PC-3 (cell line): ENCODE measurements at regions of chr10 and their contacts with region 1.

Region 1: DNA sequence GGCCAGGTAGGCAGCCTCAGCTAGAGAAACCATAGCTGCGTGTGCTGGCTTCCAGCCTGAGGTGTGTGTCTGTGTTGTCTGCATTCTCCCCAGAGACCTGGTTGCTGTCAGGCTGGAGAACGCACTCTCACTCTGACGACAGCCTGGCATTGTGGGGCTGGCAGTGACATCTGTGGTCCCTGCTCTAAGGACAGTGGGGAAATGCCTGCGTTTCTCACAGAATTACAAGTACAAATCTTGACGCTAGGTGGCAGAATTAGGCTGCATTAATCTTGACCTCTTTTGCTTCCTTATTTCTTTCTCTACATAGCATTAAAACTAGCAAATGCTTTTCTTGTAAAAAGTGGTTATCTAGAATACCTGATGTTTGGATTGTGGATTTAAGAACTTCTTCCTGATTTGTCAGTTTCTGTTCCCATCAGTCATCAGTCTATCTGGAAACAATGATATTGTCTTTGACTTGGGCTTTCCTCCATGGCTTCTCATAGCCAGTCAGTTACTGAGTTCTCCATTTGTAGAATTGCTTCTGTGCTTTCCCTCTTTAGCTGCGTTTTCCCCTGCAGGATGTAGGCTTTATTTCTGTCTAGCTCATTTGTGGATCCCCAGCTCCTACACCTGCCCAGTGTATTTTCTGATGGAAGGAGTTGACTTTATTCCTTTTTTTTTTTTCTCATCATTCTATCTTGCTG is 86.0 kb downstream of the FANK1 start:
- DNase-seq: peak; percentile 84
- ATAC-seq: peak; percentile 77
- H3K4me3 ChIP-seq: no peak overlapping the region
- H3K27ac ChIP-seq: peak overlapping the region; percentile 31; the same call in 1 of the 2 replicates
- H3K4me1 ChIP-seq: peaks cover 9% of the 10 kb centered on the region
- H3K27me3 ChIP-seq: no peaks in the 10 kb centered on the region
- CTCF ChIP-seq: peak; percentile 66

Region 2: DNA sequence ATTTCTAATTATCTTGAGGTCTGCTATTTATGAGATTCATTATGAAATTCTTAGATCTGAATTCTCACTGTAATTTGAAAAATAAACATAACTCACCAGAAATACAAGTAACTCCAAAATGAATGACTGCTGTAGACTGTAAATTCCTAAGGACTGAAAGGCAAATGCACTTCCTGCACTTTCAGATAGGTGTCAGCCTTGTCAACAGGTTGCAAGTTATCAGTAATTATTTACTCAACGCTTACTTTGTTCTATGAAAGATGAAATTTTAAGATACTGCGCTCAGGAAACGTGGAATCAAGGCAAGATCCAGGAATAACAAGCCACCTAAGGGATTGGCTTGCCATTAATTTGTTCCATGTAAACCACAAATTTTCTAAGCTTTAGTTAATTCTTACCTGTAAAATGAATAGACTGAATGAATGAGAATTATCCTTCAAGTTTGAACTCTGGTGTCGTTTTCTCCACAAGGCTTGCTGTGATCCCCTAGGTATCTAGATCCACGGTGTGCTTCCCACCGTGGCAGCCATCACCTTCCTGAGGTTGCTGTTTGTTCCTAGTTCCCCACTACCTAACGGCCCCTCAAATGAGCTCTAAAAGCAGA is 113.9 kb before region 1 on chr10:
- CTCF ChIA-PET with region 1: no interaction called
- POLR2A ChIA-PET with region 1: no interaction called
- intact Hi-C with region 1: loop called (anchors 2 kb)
- DNase-seq: peak; percentile 74
- ATAC-seq: peak; percentile 67
- H3K4me3 ChIP-seq: no peak overlapping the region
- H3K27ac ChIP-seq: no peak overlapping the region
- H3K4me1 ChIP-seq: no peaks in the 10 kb centered on the region
- H3K27me3 ChIP-seq: no peaks in the 10 kb centered on the region
- CTCF ChIP-seq: peak; percentile 90

Region 3: GRCh38 chr10:126016156-126016805 is 33.9 kb after region 1 on chr10:
- CTCF ChIA-PET with region 1: no interaction called
- POLR2A ChIA-PET with region 1: no interaction called
- intact Hi-C with region 1: no loop called
- DNase-seq: no peak
- ATAC-seq: no peak
- H3K4me3 ChIP-seq: no peak overlapping the region
- H3K27ac ChIP-seq: no peak overlapping the region
- H3K4me1 ChIP-seq: peaks cover 34% of the 10 kb centered on the region
- H3K27me3 ChIP-seq: no peaks in the 10 kb centered on the region
- CTCF ChIP-seq: no peak

Region 4: GRCh38 chr10:126199221-126199998 is 217.0 kb after region 1 on chr10:
- CTCF ChIA-PET with region 1: no interaction called
- POLR2A ChIA-PET with region 1: no interaction called
- intact Hi-C with region 1: loop called (anchors 1 kb)
- DNase-seq: peak; percentile 94
- ATAC-seq: peak; percentile 94
- H3K4me3 ChIP-seq: no peak overlapping the region
- H3K27ac ChIP-seq: peak overlapping the region; percentile 88
- H3K4me1 ChIP-seq: peaks cover 22% of the 10 kb centered on the region
- H3K27me3 ChIP-seq: no peaks in the 10 kb centered on the region
- CTCF ChIP-seq: no peak

Region 5: GRCh38 chr10:126387023-126387921 is 404.9 kb after region 1 on chr10:
- CTCF ChIA-PET with region 1: no interaction called
- POLR2A ChIA-PET with region 1: no interaction called
- intact Hi-C with region 1: loop called (anchors 1 kb)
- DNase-seq: peak; percentile 73
- ATAC-seq: peak; percentile 71
- H3K4me3 ChIP-seq: peak overlapping the region; percentile 73
- H3K27ac ChIP-seq: peak overlapping the region; percentile 12; the same call in 1 of the 2 replicates
- H3K4me1 ChIP-seq: peaks cover 25% of the 10 kb centered on the region
- H3K27me3 ChIP-seq: no peaks in the 10 kb centered on the region
- CTCF ChIP-seq: peak; percentile 76

Region 6: GRCh38 chr10:126749015-126749655 is 766.7 kb after region 1 on chr10:
- CTCF ChIA-PET with region 1: no interaction called
- POLR2A ChIA-PET with region 1: no interaction called
- intact Hi-C with region 1: loop called (anchors 2 kb)
- DNase-seq: peak; percentile 93
- ATAC-seq: peak; percentile 86
- H3K4me3 ChIP-seq: no peak overlapping the region
- H3K27ac ChIP-seq: peak overlapping the region; percentile 35
- H3K4me1 ChIP-seq: peaks cover 15% of the 10 kb centered on the region
- H3K27me3 ChIP-seq: no peaks in the 10 kb centered on the region
- CTCF ChIP-seq: peak; percentile 78